ENCODE measurements at regions of chr13 and their contacts with region 1.

Region 1: GRCh38 chr13:43792076-43792881 is 5.5 kb upstream of the ENOX1 start:
- DNase-seq: no peak
- H3K4me3 ChIP-seq: no peak overlapping the region
- H3K27ac ChIP-seq: no peak overlapping the region
- H3K4me1 ChIP-seq: peaks cover 10% of the 10 kb centered on the region
- H3K27me3 ChIP-seq: peaks cover 13% of the 10 kb centered on the region
- CTCF ChIP-seq: no peak

Region 2: DNA sequence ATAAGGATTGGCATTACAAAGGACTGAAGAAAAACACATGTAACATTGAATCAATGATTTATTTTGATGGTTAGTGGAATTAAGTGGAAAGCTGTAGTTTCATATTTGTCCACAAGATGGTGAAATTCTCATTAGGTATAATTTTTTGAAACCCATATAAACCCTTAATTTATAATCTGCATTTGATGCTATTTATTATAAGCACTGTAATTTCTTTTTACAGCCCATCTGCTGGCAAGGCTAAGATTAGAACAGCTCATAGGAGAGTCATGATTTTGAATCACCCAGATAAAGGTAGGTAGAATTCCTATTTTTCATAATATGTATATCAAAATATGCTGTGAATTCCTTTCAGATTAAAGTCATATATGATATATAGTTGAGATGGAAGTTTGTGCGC is 706.7 kb before region 1 on chr13:
- intact Hi-C with region 1: loop called (anchors 10 kb)
- DNase-seq: no peak
- H3K4me3 ChIP-seq: no peak overlapping the region
- H3K27ac ChIP-seq: no peak overlapping the region
- H3K4me1 ChIP-seq: peaks cover 9% of the 10 kb centered on the region
- H3K27me3 ChIP-seq: no peaks in the 10 kb centered on the region
- CTCF ChIP-seq: peak; percentile 73

Measured in left ventricle myocardium inferior (tissue), 1 donor.